ENCODE measurements at regions of chr16 and their contacts with region 1.

Region 1: GRCh38 chr16:78778101-78779004 is 678.9 kb downstream of the WWOX start:
- DNase-seq: peak; percentile 63
- H3K4me3 Mint-ChIP-seq: peak overlapping the region; percentile 57
- H3K27ac Mint-ChIP-seq: peak overlapping the region; percentile 77
- H3K4me1 Mint-ChIP-seq: peaks cover 73% of the 10 kb centered on the region
- H3K27me3 Mint-ChIP-seq: no peaks in the 10 kb centered on the region

Region 2: DNA sequence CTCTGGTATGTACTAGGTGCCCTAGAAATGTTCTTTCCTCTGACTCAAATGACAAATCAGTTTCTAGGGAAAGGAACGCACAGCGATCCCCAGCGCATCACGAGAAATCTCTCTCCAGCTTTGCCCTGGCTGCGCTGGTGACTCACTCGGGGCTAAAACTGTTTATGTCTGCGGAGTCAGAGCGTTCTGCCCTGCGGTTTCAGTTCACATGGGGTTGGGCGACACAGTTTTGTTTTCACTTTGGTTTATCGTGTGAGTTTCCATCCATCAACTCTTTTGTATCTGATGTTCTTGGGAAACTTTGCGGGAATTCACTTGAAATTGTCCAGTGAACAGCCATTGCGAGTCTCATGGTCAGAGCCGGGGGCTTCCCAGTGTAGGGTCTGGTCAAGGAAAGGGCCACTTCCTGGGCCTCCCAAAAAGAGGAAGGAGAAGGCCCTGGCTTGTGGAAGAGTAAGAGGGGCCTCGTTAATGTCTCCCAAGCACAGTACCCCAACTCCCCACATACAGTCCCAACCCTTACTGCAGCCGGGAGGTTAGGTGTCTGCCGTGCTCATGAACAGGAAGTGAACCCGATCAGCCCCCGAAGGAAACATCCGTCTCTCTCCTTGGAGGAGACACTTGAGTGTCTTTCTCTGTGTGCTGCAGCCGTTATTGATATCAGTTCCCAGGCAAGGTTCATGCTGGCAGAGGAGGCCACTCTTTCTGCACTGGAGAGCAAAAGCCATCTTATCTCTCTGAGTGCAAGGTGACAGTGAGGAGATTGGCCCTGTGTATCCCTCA is 35.7 kb before region 1 on chr16:
- intact Hi-C with region 1: loop called (anchors 1 kb)
- DNase-seq: peak; percentile 70
- H3K4me3 Mint-ChIP-seq: peak overlapping the region; percentile 74
- H3K27ac Mint-ChIP-seq: peak overlapping the region; percentile 77
- H3K4me1 Mint-ChIP-seq: peaks cover 33% of the 10 kb centered on the region
- H3K27me3 Mint-ChIP-seq: peaks cover 10% of the 10 kb centered on the region

Region 3: DNA sequence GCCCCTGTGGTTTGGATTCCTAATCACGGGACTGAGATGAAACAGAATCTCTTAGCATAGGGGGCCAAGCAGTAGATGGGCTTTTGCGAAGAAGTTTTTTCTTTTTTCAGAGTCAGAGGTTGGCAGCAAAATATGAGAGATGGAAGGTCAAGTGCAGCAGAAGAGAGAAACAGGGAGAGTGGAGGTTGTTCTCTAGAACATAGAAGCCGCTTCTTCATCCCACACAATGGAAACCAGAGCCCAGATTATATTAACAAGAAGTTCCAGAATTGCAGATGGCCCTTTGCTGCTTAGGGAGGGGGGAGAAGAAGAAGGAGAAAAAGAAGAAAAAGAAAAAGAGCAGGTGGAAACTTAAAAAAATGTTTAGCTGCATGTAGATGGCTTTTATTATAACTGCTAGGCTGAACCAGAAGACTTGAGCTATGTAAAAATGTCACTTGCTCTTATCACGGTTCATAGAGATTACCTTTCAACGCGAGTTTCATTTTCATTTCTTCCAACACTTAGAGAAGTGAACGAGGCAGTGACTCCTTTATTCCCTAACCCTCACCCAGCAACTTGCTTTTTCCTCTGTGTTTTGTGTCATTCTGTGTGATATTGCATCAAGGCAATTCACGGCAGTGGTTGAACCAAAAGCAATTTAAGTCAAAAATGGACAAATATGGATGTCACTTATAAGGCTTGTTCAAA is 58.6 kb after region 1 on chr16:
- intact Hi-C with region 1: loop called (anchors 2 kb)
- DNase-seq: no peak
- H3K4me3 Mint-ChIP-seq: peak overlapping the region; percentile 25
- H3K27ac Mint-ChIP-seq: peak overlapping the region; percentile 86
- H3K4me1 Mint-ChIP-seq: peaks cover 11% of the 10 kb centered on the region
- H3K27me3 Mint-ChIP-seq: peaks cover 3% of the 10 kb centered on the region

Region 4: GRCh38 chr16:78962457-78962929 is 184.1 kb after region 1 on chr16:
- intact Hi-C with region 1: loop called (anchors 1 kb)
- DNase-seq: no peak
- H3K4me3 Mint-ChIP-seq: no peak overlapping the region
- H3K27ac Mint-ChIP-seq: peak overlapping the region; percentile 53
- H3K4me1 Mint-ChIP-seq: peaks cover 9% of the 10 kb centered on the region
- H3K27me3 Mint-ChIP-seq: peaks cover 2% of the 10 kb centered on the region

Region 5: DNA sequence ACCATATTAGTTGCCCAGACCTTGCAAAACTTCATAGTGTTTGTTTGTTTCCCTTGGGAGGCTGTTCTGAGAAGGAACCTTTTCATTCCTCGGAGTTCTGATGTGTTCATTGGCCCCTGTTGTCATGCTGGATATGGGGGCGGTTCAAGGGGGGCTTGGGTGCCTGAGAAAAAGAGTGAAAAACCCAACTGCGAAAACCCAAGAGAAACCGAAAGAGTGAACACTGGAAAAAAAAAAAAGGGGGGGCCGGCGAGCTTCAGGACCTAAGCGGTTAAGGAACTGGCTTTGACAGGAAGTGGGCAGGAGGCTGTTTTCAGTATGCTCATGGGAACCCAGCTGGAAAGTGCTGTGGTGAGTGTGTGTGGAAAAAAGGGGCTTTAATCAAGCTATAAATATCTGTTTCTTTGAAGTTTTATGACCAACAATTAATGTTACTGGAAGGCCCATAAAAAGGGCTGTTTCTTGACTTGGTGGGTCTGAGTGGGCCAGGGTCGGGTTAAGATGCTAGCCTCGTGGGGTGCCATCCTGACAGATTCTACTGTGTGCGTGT is 311.5 kb after region 1 on chr16:
- intact Hi-C with region 1: loop called (anchors 1 kb)
- DNase-seq: peak; percentile 66
- H3K4me3 Mint-ChIP-seq: peak overlapping the region; percentile 62
- H3K27ac Mint-ChIP-seq: peak overlapping the region; percentile 95
- H3K4me1 Mint-ChIP-seq: peaks cover 53% of the 10 kb centered on the region
- H3K27me3 Mint-ChIP-seq: no peaks in the 10 kb centered on the region

Region 6: GRCh38 chr16:79316004-79316458 is 537.7 kb after region 1 on chr16:
- intact Hi-C with region 1: loop called (anchors 1 kb)
- DNase-seq: peak; percentile 54
- H3K4me3 Mint-ChIP-seq: peak overlapping the region; percentile 64
- H3K27ac Mint-ChIP-seq: peak overlapping the region; percentile 90
- H3K4me1 Mint-ChIP-seq: peaks cover 29% of the 10 kb centered on the region
- H3K27me3 Mint-ChIP-seq: peaks cover 10% of the 10 kb centered on the region

Region 7: DNA sequence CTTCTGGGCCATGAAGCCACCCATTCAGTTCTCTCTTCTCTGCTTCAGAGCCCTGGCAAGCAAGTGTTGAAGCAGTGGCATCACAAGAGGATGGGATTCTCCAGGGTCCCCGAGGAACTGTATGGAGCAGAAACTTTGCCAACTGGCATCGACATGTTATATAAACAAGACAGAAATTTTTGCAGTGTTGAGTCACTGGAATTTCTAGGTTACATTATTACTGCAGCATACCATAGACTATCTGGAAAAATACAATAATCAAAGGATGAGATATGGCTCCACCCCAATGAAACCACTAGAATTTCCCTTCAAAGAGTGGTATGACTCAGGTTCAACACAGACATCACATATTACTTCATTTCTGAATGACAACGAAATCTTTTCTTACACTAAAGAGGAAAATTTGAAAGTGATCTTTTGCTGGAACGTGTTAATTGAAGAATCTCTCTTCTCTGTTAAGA is 1419.4 kb after region 1 on chr16:
- intact Hi-C with region 1: loop called (anchors 5 kb)
- DNase-seq: no peak
- H3K4me3 Mint-ChIP-seq: no peak overlapping the region
- H3K27ac Mint-ChIP-seq: peak overlapping the region; percentile 33
- H3K4me1 Mint-ChIP-seq: peaks cover 4% of the 10 kb centered on the region
- H3K27me3 Mint-ChIP-seq: no peaks in the 10 kb centered on the region